ENCODE measurements at regions of chr7 and their contacts with region 1.

Region 1: GRCh38 chr7:74656837-74657691 is 454 bp upstream of the GTF2I start:
- DNase-seq: peak; percentile 99
- ATAC-seq: peak; percentile 80 to 88 (median 84)
- H3K4me3 ChIP-seq: peak overlapping the region; percentile 100
- H3K27ac ChIP-seq: peak overlapping the region; percentile 100
- H3K4me1 ChIP-seq: peaks cover 45% of the 10 kb centered on the region
- H3K27me3 ChIP-seq: no peaks in the 10 kb centered on the region
- CTCF ChIP-seq: peak; percentile 14

Region 2: GRCh38 chr7:74464943-74465886 is 191.8 kb before region 1 on chr7:
- intact Hi-C with region 1: loop called in 1 of 2 experiments (anchors 5 kb)
- DNase-seq: no peak
- ATAC-seq: no peak
- H3K4me3 ChIP-seq: no peak overlapping the region
- H3K27ac ChIP-seq: peak overlapping the region; percentile 93
- H3K4me1 ChIP-seq: peaks cover 76% of the 10 kb centered on the region
- H3K27me3 ChIP-seq: no peaks in the 10 kb centered on the region
- CTCF ChIP-seq: no peak

Region 3: GRCh38 chr7:74617180-74617744 is 39.8 kb before region 1 on chr7:
- intact Hi-C with region 1: loop called in 1 of 2 experiments (anchors 5 kb)
- DNase-seq: peak; percentile 60 to 76
- ATAC-seq: peak; percentile 80 to 89 (median 86)
- H3K4me3 ChIP-seq: peak overlapping the region; percentile 11
- H3K27ac ChIP-seq: peak overlapping the region; percentile 85
- H3K4me1 ChIP-seq: peaks cover 28% of the 10 kb centered on the region
- H3K27me3 ChIP-seq: no peaks in the 10 kb centered on the region
- CTCF ChIP-seq: no peak

Region 4: GRCh38 chr7:74637745-74638144 is 19.3 kb before region 1 on chr7:
- intact Hi-C with region 1: loop called in 1 of 2 experiments (anchors 2 kb)
- DNase-seq: no peak
- ATAC-seq: no peak
- H3K4me3 ChIP-seq: no peak overlapping the region
- H3K27ac ChIP-seq: peak overlapping the region; percentile 14
- H3K4me1 ChIP-seq: peaks cover 21% of the 10 kb centered on the region
- H3K27me3 ChIP-seq: no peaks in the 10 kb centered on the region
- CTCF ChIP-seq: no peak